ENCODE measurements at regions of chr7 and their contacts with region 1.

Region 1: GRCh38 chr7:30231271-30231670 is 53.1 kb upstream of the ZNRF2 start:
- DNase-seq: no peak
- ATAC-seq: no peak
- H3K4me3 ChIP-seq: no peak overlapping the region
- H3K4me3 Mint-ChIP-seq: no peak overlapping the region
- H3K27ac ChIP-seq: no peak overlapping the region
- H3K27ac Mint-ChIP-seq: no peak overlapping the region
- H3K4me1 ChIP-seq: no peaks in the 10 kb centered on the region
- H3K4me1 Mint-ChIP-seq: no peaks in the 10 kb centered on the region
- H3K27me3 ChIP-seq: no peaks in the 10 kb centered on the region
- H3K27me3 Mint-ChIP-seq: no peaks in the 10 kb centered on the region
- CTCF ChIP-seq: no peak

Region 2: GRCh38 chr7:29946428-29947186 is 284.7 kb before region 1 on chr7:
- CTCF ChIA-PET with region 1: no interaction called
- POLR2A ChIA-PET with region 1: no interaction called
- intact Hi-C with region 1: loop called in 1 of 2 experiments (anchors 5 kb)
- DNase-seq: peak in 1 of 9 experiments; percentile 7
- ATAC-seq: no peak
- H3K4me3 ChIP-seq: no peak overlapping the region
- H3K4me3 Mint-ChIP-seq: no peak overlapping the region
- H3K27ac ChIP-seq: no peak overlapping the region
- H3K27ac Mint-ChIP-seq: no peak overlapping the region
- H3K4me1 ChIP-seq: no peaks in the 10 kb centered on the region
- H3K4me1 Mint-ChIP-seq: no peaks in the 10 kb centered on the region
- H3K27me3 ChIP-seq: no peaks in the 10 kb centered on the region
- H3K27me3 Mint-ChIP-seq: no peaks in the 10 kb centered on the region
- CTCF ChIP-seq: no peak

Measured in CD8-positive, alpha-beta T cell (primary cell).